ENCODE measurements at regions of chr2 and their contacts with region 1.

Region 1: GRCh38 chr2:66813976-66814375 is 379.1 kb downstream of the MEIS1 start:
- DNase-seq: no peak
- H3K4me3 ChIP-seq: no peak overlapping the region
- H3K27ac ChIP-seq: peak overlapping the region; percentile 7 to 85 (median 80)
- H3K4me1 ChIP-seq: peaks cover 0 to 42% (median 13%) of the 10 kb centered on the region in 4 donors
- H3K27me3 ChIP-seq: no peaks in the 10 kb centered on the region
- CTCF ChIP-seq: no peak
- EP300 ChIP-seq: peak in 1 of 4 donors; percentile 22
- POLR2A ChIP-seq: no peak

Region 2: GRCh38 chr2:66915237-66915636 is 101.3 kb after region 1 on chr2:
- intact Hi-C with region 1: no loop called
- DNase-seq: no peak
- H3K4me3 ChIP-seq: no peak overlapping the region
- H3K27ac ChIP-seq: peak overlapping the region in 2 of 4 donors; percentile 39 to 51
- H3K4me1 ChIP-seq: peaks cover 0 to 18% (median 11%) of the 10 kb centered on the region in 4 donors
- H3K27me3 ChIP-seq: no peaks in the 10 kb centered on the region
- CTCF ChIP-seq: no peak
- EP300 ChIP-seq: no peak
- POLR2A ChIP-seq: no peak

Region 3: DNA sequence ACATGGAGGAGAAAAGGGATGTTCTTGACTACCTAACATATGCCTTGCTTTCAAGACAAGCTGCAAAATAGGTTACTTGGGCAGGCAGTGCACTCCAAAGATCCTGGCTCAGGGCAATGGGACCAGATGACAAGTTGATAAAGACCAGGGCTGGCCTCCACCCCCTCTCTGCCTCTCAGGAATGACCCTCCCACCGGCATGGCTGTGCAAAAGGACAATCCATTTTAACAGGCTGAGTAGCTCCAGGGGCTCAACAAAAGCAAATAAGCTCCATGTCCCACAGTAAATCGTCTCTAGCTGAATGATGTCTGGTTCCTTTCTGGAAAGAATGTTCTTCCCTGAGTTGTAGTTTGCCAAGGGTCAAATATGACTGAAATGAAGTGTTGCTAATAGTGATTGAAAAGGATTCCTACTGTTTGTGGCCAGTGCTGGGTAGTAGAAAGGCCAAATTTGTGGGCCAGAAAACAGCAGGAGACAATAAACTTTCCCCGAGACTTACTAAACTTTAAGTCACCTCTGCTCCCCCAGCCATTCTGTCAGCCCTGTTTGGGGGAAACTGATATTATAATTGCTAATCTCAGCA is 148.7 kb after region 1 on chr2:
- intact Hi-C with region 1: loop called (anchors 10 kb)
- DNase-seq: peak; percentile 94
- H3K4me3 ChIP-seq: no peak overlapping the region
- H3K27ac ChIP-seq: peak overlapping the region; percentile 44 to 87 (median 82)
- H3K4me1 ChIP-seq: peaks cover 0 to 51% (median 26%) of the 10 kb centered on the region in 4 donors
- H3K27me3 ChIP-seq: no peaks in the 10 kb centered on the region
- CTCF ChIP-seq: no peak
- EP300 ChIP-seq: peak; percentile 58 to 93 (median 78)
- POLR2A ChIP-seq: no peak

Region 4: GRCh38 chr2:67503066-67503795 is 689.3 kb after region 1 on chr2:
- intact Hi-C with region 1: no loop called
- DNase-seq: no peak
- H3K4me3 ChIP-seq: no peak overlapping the region
- H3K27ac ChIP-seq: peak overlapping the region in 3 of 4 donors; percentile 9 to 55 (median 32)
- H3K4me1 ChIP-seq: peaks cover 0 to 4% (median 0%) of the 10 kb centered on the region in 4 donors
- H3K27me3 ChIP-seq: no peaks in the 10 kb centered on the region
- CTCF ChIP-seq: no peak
- EP300 ChIP-seq: no peak
- POLR2A ChIP-seq: no peak

Measured in sigmoid colon (tissue), 7 donors.